ENCODE measurements at regions of chrX and their contacts with region 1.

Region 1: GRCh38 chrX:13167481-13168231 is 123.2 kb upstream of the FAM9C start:
- DNase-seq: peak; percentile 79
- H3K4me3 ChIP-seq: no peak overlapping the region
- H3K27ac ChIP-seq: peak overlapping the region; percentile 93
- H3K4me1 ChIP-seq: peaks cover 38% of the 10 kb centered on the region
- H3K27me3 ChIP-seq: no peaks in the 10 kb centered on the region
- CTCF ChIP-seq: no peak
- POLR2A ChIP-seq: no peak

Region 2: GRCh38 chrX:13029341-13029740 is 138.3 kb before region 1 on chrX:
- CTCF ChIA-PET with region 1: no interaction called
- POLR2A ChIA-PET with region 1: no interaction called
- dilution Hi-C with region 1: no loop called
- intact Hi-C with region 1: loop called (anchors 1 kb)
- DNase-seq: no peak
- H3K4me3 ChIP-seq: no peak overlapping the region
- H3K27ac ChIP-seq: peak overlapping the region; percentile 92
- H3K4me1 ChIP-seq: peaks cover 20% of the 10 kb centered on the region
- H3K27me3 ChIP-seq: no peaks in the 10 kb centered on the region
- CTCF ChIP-seq: no peak
- POLR2A ChIP-seq: no peak

Region 3: DNA sequence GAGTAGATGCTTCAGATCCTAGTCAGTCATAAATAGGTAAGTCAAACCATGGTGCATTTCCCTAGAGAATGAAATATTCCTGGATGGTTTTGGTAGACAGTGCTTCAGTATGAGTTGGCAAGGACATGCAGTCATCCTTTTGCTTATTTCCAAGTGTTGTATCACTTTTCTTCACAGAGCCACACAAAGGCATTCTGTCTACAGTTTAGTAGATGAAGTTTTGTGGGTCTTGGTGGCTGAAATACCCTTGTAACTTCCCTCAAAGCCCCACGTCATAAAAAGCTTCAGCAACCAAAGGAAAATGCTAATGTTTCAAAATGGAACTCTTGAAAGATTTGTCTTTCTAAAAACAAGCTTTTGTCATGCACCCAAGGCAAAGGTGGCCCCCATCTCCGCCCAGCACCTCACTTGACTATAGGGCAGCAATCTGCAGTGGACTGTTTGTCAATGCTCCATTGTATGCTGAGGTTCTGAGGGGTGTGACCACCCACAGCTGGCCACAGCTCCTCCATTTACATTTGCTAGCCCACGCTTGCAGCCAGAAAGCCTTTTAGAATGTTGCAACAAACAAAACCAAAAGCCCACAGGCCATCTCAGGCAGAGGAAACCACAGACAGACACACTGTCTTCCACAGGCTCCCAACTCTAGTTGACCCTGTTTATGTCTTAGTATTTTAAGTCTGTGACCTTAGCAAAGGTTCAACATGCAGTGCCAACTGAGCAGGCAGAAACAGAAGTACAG is 36.1 kb before region 1 on chrX:
- CTCF ChIA-PET with region 1: no interaction called
- POLR2A ChIA-PET with region 1: no interaction called
- dilution Hi-C with region 1: no loop called
- intact Hi-C with region 1: no loop called
- DNase-seq: no peak
- H3K4me3 ChIP-seq: no peak overlapping the region
- H3K27ac ChIP-seq: no peak overlapping the region
- H3K4me1 ChIP-seq: no peaks in the 10 kb centered on the region
- H3K27me3 ChIP-seq: no peaks in the 10 kb centered on the region
- CTCF ChIP-seq: no peak
- POLR2A ChIP-seq: no peak

Region 4: GRCh38 chrX:13151828-13152510 is 15.7 kb before region 1 on chrX:
- CTCF ChIA-PET with region 1: no interaction called
- POLR2A ChIA-PET with region 1: no interaction called
- dilution Hi-C with region 1: no loop called
- intact Hi-C with region 1: no loop called
- DNase-seq: peak; percentile 33
- H3K4me3 ChIP-seq: no peak overlapping the region
- H3K27ac ChIP-seq: no peak overlapping the region
- H3K4me1 ChIP-seq: peaks cover 4% of the 10 kb centered on the region
- H3K27me3 ChIP-seq: no peaks in the 10 kb centered on the region
- CTCF ChIP-seq: no peak
- POLR2A ChIP-seq: no peak

Region 5: GRCh38 chrX:13263560-13264251 is 96.0 kb after region 1 on chrX:
- CTCF ChIA-PET with region 1: no interaction called
- POLR2A ChIA-PET with region 1: no interaction called
- dilution Hi-C with region 1: no loop called
- intact Hi-C with region 1: no loop called
- DNase-seq: no peak
- H3K4me3 ChIP-seq: no peak overlapping the region
- H3K27ac ChIP-seq: no peak overlapping the region
- H3K4me1 ChIP-seq: no peaks in the 10 kb centered on the region
- H3K27me3 ChIP-seq: no peaks in the 10 kb centered on the region
- CTCF ChIP-seq: no peak
- POLR2A ChIP-seq: no peak

Region 6: DNA sequence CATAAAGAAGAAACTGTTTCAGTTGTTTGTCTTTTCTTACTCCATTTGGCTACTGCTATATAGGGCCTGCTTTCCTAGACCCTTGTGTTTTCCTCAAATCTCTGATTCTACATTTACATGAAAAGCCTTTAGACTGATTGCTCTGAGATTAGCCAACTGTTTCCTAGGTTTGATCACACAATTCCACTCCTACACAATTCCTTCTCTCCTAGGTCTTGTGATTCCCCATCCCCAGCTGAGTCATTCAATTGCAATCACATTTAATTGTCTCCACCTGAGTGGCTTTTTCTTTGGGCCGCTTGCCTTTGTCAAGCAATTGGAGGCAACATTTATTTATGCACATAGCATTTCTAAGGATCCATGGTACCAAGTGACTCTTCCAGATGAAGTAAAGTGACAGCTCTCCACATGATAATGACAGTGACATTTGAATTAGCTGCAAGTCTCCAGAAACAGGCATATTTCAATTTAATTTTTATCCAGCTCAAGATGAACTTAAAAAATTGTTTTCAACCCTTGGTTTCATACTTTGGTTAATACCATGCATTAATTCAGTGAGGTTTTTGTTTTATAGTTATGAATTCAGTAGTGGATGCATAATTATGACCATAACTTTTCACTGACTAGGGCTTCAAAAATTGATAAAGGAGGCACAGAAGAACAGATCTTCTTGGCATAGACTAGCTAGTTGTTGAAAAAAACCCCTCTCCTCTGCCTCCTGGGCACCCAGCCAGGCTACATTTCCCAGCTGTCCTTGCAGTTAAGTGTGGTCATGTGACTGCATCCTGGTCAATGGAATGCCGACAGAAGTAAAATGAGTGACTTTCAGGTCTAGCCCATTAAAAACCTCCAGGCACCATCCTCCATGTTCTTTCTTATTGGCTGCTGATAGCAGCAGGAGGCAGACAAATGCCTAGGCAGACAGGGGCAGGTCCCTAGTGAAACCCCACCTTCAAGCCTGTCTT is 116.6 kb after region 1 on chrX:
- CTCF ChIA-PET with region 1: interaction called, 3 read pairs
- POLR2A ChIA-PET with region 1: no interaction called
- dilution Hi-C with region 1: no loop called
- intact Hi-C with region 1: loop called (anchors 5 kb)
- DNase-seq: peak; percentile 71
- H3K4me3 ChIP-seq: no peak overlapping the region
- H3K27ac ChIP-seq: peak overlapping the region; percentile 62
- H3K4me1 ChIP-seq: peaks cover 49% of the 10 kb centered on the region
- H3K27me3 ChIP-seq: no peaks in the 10 kb centered on the region
- CTCF ChIP-seq: no peak
- POLR2A ChIP-seq: no peak

Measured in endothelial cell of umbilical vein (primary cell).